SK-N-SH (cell line): ENCODE measurements at regions of chr9 and their contacts with region 1.

Region 1: GRCh38 chr9:14935106-14935751 is 25.0 kb upstream of the FREM1 start:
- DNase-seq: no peak
- H3K4me3 ChIP-seq: no peak overlapping the region
- H3K27ac ChIP-seq: peak overlapping the region in 1 of 2 experiments; percentile 91; a peak in 2 of 4 replicates
- H3K4me1 ChIP-seq: peaks cover 0 to 12% of the 10 kb centered on the region in 2 experiments; a peak in 2 of 4 replicates
- H3K27me3 ChIP-seq: no peaks in the 10 kb centered on the region
- CTCF ChIP-seq: no peak
- EP300 ChIP-seq: no peak
- RAD21 ChIP-seq: no peak

Region 2: GRCh38 chr9:14956208-14956607 is 21.0 kb after region 1 on chr9:
- CTCF ChIA-PET with region 1: interaction called, 3 read pairs
- POLR2A ChIA-PET with region 1: interaction called, 16 read pairs
- DNase-seq: peak; percentile 33
- H3K4me3 ChIP-seq: no peak overlapping the region
- H3K27ac ChIP-seq: peak overlapping the region in 1 of 2 experiments; percentile 97; a peak in 2 of 4 replicates
- H3K4me1 ChIP-seq: peaks cover 0 to 12% of the 10 kb centered on the region in 2 experiments; a peak in 2 of 4 replicates
- H3K27me3 ChIP-seq: no peaks in the 10 kb centered on the region
- CTCF ChIP-seq: no peak
- EP300 ChIP-seq: peak in 1 of 2 experiments; percentile 94; a peak in 2 of 4 replicates
- RAD21 ChIP-seq: peak; percentile 24; the same call in 1 of the 2 replicates

Region 3: GRCh38 chr9:15018096-15018637 is 82.9 kb after region 1 on chr9:
- CTCF ChIA-PET with region 1: no interaction called
- POLR2A ChIA-PET with region 1: no interaction called
- DNase-seq: no peak
- H3K4me3 ChIP-seq: no peak overlapping the region
- H3K27ac ChIP-seq: no peak overlapping the region
- H3K4me1 ChIP-seq: no peaks in the 10 kb centered on the region
- H3K27me3 ChIP-seq: no peaks in the 10 kb centered on the region
- CTCF ChIP-seq: no peak
- EP300 ChIP-seq: no peak
- RAD21 ChIP-seq: no peak

Region 4: GRCh38 chr9:15142878-15143534 is 207.8 kb after region 1 on chr9:
- CTCF ChIA-PET with region 1: no interaction called
- POLR2A ChIA-PET with region 1: no interaction called
- DNase-seq: peak; percentile 71
- H3K4me3 ChIP-seq: no peak overlapping the region
- H3K27ac ChIP-seq: no peak overlapping the region
- H3K4me1 ChIP-seq: no peaks in the 10 kb centered on the region
- H3K27me3 ChIP-seq: no peaks in the 10 kb centered on the region; the same call in 1 of the 2 replicates
- CTCF ChIP-seq: peak; percentile 85
- EP300 ChIP-seq: no peak
- RAD21 ChIP-seq: peak; percentile 82

Region 5: DNA sequence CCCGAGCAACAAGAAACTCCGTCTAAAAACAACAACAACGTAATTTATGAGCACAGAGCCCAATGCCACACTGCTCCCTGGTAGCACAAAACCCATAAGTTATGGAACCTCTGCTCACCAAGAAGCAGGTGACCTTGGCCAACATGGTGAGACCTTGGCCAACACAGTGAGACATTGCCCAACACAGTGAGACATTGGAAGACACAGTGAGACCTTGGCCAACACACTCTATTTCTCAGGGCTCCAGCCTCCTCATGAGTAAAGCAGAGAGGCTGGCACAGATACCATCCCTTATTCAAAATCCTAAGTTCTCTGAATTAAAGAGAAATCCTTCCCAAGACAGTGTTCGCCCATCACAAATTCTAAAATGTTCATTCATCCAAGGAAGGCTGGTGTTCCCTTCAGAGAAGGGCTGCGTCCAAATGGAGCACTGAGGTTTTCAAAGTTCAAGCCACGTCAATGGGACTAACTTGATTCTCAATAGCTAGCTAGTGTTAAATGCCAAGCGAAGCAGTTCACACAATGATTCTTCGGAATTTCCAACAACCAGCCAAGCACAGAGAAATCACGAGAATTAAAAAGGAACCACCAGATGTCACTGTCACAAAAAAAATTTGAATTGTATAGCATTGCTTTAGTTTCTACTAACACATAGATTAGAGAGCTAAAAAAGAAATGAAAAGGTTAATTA is 342.3 kb after region 1 on chr9:
- CTCF ChIA-PET with region 1: no interaction called
- POLR2A ChIA-PET with region 1: no interaction called
- DNase-seq: peak; percentile 24
- H3K4me3 ChIP-seq: no peak overlapping the region
- H3K27ac ChIP-seq: no peak overlapping the region
- H3K4me1 ChIP-seq: no peaks in the 10 kb centered on the region
- H3K27me3 ChIP-seq: no peaks in the 10 kb centered on the region
- CTCF ChIP-seq: peak; percentile 58
- EP300 ChIP-seq: no peak
- RAD21 ChIP-seq: peak; percentile 73